ENCODE measurements at regions of chr11 and their contacts with region 1.

Region 1: DNA sequence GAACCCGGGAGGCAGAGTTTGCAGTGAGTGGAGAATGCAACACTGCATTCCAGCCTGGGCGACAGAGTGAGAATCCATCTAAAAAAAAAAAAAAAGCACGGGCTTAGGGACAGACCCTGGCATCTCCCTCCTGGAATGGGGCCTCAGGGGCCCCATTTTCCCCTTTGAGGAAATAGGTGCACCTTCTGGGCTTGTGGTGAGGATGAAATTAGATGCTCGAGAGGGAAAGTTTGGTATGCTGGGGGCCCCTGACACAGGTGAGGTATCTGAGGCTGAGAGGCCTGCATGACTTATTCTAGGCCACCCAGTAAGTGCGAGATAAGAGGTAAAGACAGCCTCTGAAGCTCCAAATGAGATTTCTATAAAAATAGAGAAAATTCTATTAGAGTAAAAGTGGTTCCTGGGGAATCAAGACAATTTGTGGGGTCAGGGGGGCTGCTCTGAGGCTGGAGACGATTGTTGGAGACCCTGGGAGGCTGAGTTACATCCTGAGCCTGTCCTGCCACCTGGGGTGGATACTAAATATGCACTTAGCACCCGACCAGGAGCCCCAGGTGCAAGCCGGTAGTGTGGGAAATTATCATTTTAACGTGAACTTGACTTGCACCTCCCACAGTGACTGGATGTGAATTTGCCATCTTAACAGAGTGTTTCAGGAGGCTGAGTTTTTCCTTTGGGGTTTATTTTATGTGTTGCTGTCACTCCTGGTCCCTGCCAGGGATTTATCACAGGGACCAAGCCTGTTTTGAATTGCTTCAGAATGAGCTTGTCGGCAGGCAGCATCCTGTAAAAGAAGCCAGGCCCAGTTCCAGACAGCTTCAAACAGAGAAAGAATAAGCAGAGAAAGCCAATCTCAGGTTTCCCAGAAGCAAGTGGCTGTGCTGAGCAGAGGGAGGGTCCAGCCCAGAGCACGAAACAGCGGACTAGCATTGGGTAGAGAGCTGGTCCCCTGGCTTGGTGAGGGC is 48.4 kb upstream of the TSKU start:
- DNase-seq: no peak
- H3K4me3 ChIP-seq: no peak overlapping the region
- H3K27ac ChIP-seq: no peak overlapping the region
- H3K4me1 ChIP-seq: peaks cover 28% of the 10 kb centered on the region
- H3K27me3 ChIP-seq: peaks cover 9% of the 10 kb centered on the region
- CTCF ChIP-seq: no peak

Region 2: DNA sequence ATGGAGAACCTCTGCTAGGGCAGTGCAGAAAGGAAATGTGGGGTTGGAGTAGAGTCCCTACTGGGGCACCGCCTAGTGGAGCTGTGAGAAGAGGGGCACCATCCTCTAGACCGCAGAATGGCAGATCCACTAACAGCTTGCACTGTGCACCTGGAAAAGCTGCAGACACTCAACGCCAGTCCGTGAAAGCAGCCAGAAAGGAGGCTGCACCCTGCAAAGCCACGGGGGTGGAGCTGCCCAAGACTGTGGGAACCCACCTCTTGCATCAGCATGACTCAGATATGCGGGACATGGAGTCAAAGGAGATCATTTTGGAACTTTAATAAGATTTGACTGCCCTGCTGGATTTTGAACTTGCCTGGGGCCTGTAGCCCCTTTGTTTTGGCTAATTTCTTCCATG is 57.1 kb after region 1 on chr11:
- intact Hi-C with region 1: loop called (anchors 2 kb)
- DNase-seq: no peak
- H3K4me3 ChIP-seq: no peak overlapping the region
- H3K27ac ChIP-seq: peak overlapping the region; percentile 54
- H3K4me1 ChIP-seq: peaks cover 68% of the 10 kb centered on the region
- H3K27me3 ChIP-seq: no peaks in the 10 kb centered on the region
- CTCF ChIP-seq: no peak

Region 3: DNA sequence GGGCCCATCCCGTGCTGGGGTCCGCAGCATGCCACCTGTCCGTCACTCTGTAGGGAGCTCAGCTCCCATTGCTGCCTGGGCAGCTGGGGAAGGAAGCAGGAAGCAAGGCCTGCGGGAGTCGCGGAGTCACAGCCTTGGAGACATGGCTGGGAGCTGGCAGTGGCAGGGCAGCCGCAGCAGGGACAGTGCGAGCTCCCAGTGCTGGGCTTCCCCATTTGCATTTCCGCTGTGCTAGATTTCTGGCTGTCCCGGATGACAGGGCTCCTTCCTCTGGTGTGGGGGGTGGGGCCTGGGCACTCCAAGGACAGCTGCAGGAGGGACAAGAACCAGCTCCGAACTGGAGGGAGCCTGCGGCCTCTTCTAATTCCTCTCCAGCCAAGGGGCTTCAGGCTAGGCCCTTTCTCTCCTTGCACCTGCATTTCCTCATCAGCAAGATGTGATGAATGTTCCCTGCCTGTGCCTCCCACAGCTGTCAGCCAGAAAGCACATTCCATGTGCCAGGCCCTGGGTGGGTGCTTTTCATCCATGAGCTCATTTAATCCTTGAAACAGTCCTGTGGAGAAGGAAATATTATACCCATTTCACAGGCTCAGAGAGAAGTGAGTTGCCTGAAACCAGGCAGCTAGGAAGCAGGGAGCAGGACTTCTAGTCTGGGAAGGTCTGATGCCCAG is 441.3 kb after region 1 on chr11:
- intact Hi-C with region 1: no loop called
- DNase-seq: peak; percentile 56
- H3K4me3 ChIP-seq: peak overlapping the region; percentile 32
- H3K27ac ChIP-seq: peak overlapping the region; percentile 51
- H3K4me1 ChIP-seq: peaks cover 4% of the 10 kb centered on the region
- H3K27me3 ChIP-seq: no peaks in the 10 kb centered on the region
- CTCF ChIP-seq: no peak

Measured in left ventricle myocardium inferior (tissue), 1 donor.